ENCODE measurements at regions of chr3 and their contacts with region 1.

Region 1: DNA sequence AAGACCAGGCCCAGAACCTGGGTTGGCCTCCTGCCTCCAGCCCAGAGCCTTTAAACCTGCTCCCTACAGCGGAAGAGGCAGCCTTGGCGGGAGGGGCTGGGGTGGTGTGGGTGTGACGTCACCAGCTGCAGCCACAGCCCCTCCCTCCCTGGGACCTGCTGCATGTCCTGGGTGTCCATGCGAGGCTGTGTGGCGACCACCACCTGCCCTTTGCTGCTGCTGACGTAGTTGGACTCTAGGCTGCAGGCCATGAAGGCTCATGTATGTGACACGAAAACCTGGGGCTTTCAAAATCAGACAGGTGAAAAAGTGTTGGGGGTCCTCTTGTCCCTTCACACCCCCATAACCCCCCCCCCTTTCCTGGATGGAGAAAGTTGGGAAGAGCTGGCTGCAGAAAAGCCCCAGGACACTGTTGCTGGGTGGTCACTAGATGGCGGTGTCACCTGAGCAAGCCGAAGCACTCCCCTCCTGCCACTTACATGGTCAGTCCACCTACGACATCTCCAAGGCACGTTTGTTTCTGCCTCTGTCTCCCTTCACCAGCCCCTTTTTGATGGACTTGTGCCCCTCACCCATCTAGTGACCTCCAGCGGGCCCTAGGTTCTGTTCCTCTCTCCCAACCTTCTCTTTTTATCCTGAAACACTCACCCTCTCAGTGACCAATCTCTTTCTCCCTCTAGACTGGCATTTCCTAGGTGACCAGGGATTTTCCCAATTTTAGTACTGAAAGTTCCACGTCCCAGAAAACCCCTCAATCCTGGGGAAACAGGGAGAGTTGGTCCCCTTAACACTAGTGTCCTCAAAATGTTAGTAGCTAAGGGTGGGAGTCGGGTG is 35.2 kb downstream of the SLC6A20 start:
- DNase-seq: peak in 1 of 2 experiments; percentile 70
- H3K4me3 ChIP-seq: no peak overlapping the region
- H3K27ac ChIP-seq: no peak overlapping the region
- H3K4me1 ChIP-seq: peaks cover 0 to 6% (median 4%) of the 10 kb centered on the region in 4 experiments; a peak in 3 of 7 replicates
- H3K27me3 ChIP-seq: no peaks in the 10 kb centered on the region; a peak in 1 of 7 replicates
- CTCF ChIP-seq: peak; percentile 81 to 93 (median 93)
- EP300 ChIP-seq: no peak
- POLR2A ChIP-seq: no peak
- RAD21 ChIP-seq: peak; percentile 83 to 89

Region 2: GRCh38 chr3:45381168-45381852 is 379.8 kb before region 1 on chr3:
- CTCF ChIA-PET with region 1: no interaction called
- POLR2A ChIA-PET with region 1: no interaction called
- DNase-seq: no peak
- H3K4me3 ChIP-seq: no peak overlapping the region
- H3K27ac ChIP-seq: no peak overlapping the region
- H3K4me1 ChIP-seq: no peaks in the 10 kb centered on the region; a peak in 1 of 7 replicates
- H3K27me3 ChIP-seq: no peaks in the 10 kb centered on the region
- CTCF ChIP-seq: no peak
- EP300 ChIP-seq: no peak
- POLR2A ChIP-seq: no peak
- RAD21 ChIP-seq: no peak

Region 3: DNA sequence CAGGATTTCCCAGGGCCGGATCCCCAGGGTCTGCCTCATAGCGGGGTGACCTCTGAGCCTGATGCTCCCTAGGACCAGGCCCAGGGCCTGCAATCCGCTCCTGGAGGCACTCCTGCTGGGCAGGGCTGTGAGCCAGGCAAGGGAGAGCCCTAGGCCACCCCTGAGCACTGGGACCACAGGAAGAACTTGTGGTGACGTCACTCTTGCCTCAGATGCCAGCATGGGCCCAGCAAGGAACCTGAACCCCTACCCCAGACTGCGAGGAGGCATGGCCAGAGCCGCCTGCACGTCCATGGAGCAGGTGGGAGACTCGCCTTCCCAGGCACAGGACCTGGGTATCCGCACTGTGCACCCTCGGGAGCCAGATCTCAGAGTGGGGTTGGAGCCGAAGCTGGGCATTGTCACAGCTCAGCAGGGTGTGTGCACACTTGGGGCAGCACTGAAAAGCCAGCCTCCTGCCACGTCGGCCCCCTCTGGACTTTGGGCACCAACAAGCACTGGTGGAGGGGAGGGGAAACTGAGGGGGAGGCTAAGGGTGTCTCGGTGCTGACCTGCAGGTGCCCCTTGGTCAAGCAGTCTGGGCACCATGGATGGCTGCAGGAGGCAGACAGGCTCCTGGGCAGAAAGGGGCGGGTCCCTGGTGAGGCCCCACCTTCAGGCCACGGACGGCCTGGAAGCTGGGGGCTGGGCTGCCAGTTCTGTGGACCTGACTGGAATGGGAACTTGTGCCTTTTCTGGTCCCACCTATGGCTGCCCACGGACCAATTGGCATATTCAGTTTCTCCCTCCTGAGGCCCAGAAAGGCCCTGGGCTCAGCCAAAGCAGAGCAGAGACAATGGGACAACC is 14.1 kb before region 1 on chr3:
- CTCF ChIA-PET with region 1: interaction called, 49 read pairs
- POLR2A ChIA-PET with region 1: interaction called, 4 read pairs
- DNase-seq: no peak
- H3K4me3 ChIP-seq: no peak overlapping the region
- H3K27ac ChIP-seq: no peak overlapping the region
- H3K4me1 ChIP-seq: peaks cover 0 to 4% (median 4%) of the 10 kb centered on the region in 4 experiments; a peak in 4 of 7 replicates
- H3K27me3 ChIP-seq: no peaks in the 10 kb centered on the region
- CTCF ChIP-seq: no peak
- EP300 ChIP-seq: no peak
- POLR2A ChIP-seq: no peak
- RAD21 ChIP-seq: no peak

Region 4: DNA sequence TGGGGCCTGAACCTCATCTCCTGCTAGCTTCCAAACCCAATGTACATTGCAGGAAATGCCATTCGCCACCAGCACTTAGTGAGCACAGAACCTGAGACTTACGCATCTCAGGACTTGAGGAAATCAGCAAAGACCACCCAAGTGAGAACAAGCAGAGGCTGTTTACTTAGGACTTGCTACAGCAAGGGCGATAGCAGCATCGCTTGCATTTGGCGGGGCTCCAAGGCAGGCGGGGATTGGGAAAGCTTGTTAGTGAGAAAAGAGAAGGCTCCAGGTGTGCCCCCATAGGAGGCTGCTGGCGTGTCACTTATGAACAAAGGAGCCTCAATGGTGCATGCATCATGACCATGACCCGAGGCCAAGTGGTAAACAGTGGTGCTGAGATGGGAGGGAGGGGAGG is 15.5 kb after region 1 on chr3:
- CTCF ChIA-PET with region 1: interaction called, 64 read pairs
- POLR2A ChIA-PET with region 1: interaction called, 4 read pairs
- DNase-seq: no peak
- H3K4me3 ChIP-seq: no peak overlapping the region
- H3K27ac ChIP-seq: no peak overlapping the region
- H3K4me1 ChIP-seq: peaks cover 0 to 2% (median 0%) of the 10 kb centered on the region in 4 experiments; a peak in 1 of 7 replicates
- H3K27me3 ChIP-seq: no peaks in the 10 kb centered on the region
- CTCF ChIP-seq: no peak
- EP300 ChIP-seq: no peak
- POLR2A ChIP-seq: no peak
- RAD21 ChIP-seq: no peak

Region 5: DNA sequence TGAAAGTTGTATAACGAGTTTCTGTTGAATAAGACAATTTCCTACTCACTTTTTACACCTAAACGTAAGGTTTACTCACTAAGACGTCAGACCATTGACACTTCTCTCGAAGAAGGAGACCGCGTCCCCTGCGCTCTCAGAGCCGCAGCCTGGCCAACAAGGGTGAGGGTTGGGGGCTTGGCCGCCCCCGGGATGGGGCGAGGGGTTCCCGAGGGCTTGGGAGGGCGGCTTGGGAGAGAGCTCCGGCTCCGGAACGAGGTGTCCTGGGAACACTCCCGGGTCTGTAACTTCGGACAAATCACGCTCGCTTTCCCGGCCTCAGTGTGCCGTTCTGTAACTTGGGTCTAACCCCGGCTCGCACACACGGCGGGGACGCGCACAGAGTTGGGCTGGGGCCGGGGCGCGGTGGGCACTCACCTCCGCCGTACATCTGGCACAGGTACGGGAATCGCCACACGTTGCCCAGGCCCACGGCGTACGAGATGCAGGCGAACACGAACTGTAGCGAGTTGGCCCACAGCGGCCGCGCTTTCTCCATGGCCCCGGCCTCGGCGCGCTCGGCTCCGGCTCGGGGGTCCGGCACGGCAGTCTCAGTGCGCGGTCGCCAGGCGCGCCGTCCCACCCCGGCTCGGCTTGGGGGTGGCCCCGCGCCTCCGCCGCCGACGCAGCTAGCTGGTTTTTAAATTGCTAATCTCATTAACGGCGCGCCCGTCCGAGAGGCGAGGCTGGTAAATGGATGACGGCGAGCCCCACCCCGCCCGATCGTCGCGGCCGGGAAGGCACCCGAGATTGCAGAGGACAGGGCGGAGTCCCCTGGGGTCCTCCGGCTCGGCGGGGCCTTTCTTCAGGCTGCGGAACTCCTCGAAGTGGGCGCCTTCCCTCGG is 35.0 kb after region 1 on chr3 and contains the start of gene SLC6A20:
- CTCF ChIA-PET with region 1: interaction called, 13 read pairs
- POLR2A ChIA-PET with region 1: no interaction called
- DNase-seq: peak in 1 of 2 experiments; percentile 67
- H3K4me3 ChIP-seq: peak within 1 kb of the TSS; percentile 47 to 68 (median 54)
- H3K27ac ChIP-seq: no peak within 1 kb of the TSS
- H3K4me1 ChIP-seq: peaks cover 0 to 3% (median 0%) of the 10 kb centered on the region in 4 experiments; a peak in 2 of 7 replicates
- H3K27me3 ChIP-seq: peaks cover 22 to 48% (median 41%) of the 10 kb centered on the region in 4 experiments
- CTCF ChIP-seq: no peak
- EP300 ChIP-seq: no peak
- POLR2A ChIP-seq: no peak
- RAD21 ChIP-seq: no peak
- total RNA-seq, gene SLC6A20: not detected in 2 replicates

Region 6: GRCh38 chr3:45807681-45808540 is 46.8 kb after region 1 on chr3:
- CTCF ChIA-PET with region 1: no interaction called
- POLR2A ChIA-PET with region 1: no interaction called
- DNase-seq: no peak
- H3K4me3 ChIP-seq: no peak overlapping the region
- H3K27ac ChIP-seq: no peak overlapping the region
- H3K4me1 ChIP-seq: no peaks in the 10 kb centered on the region; a peak in 1 of 7 replicates
- H3K27me3 ChIP-seq: no peaks in the 10 kb centered on the region
- CTCF ChIP-seq: no peak
- EP300 ChIP-seq: no peak
- POLR2A ChIP-seq: no peak
- RAD21 ChIP-seq: no peak

Region 7: DNA sequence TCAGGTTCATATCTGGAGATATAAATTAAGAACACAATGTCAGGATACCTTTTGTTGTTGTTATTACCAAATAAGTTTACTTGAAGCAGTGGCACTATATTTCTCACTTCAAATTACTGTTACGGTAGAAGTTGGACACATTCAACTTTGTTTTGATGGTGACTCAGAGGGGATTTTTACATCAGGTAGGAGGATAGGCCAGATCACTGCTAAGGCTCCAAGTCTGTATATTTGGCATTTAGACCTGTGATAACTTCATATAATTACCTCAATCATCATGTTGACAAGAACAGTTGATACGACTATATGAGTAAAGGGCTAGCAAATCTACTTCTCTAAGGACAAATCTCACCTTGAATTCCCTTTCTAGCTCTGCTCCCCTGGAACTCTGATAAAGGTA is 65.2 kb after region 1 on chr3:
- CTCF ChIA-PET with region 1: interaction called, 59 read pairs
- POLR2A ChIA-PET with region 1: no interaction called
- DNase-seq: no peak
- H3K4me3 ChIP-seq: no peak overlapping the region
- H3K27ac ChIP-seq: no peak overlapping the region
- H3K4me1 ChIP-seq: no peaks in the 10 kb centered on the region
- H3K27me3 ChIP-seq: no peaks in the 10 kb centered on the region
- CTCF ChIP-seq: no peak
- EP300 ChIP-seq: no peak
- POLR2A ChIP-seq: no peak
- RAD21 ChIP-seq: no peak

Region 8: GRCh38 chr3:45832691-45833090 is 71.6 kb after region 1 on chr3:
- CTCF ChIA-PET with region 1: interaction called, 59 read pairs
- POLR2A ChIA-PET with region 1: interaction called, 4 read pairs
- DNase-seq: no peak
- H3K4me3 ChIP-seq: no peak overlapping the region
- H3K27ac ChIP-seq: no peak overlapping the region
- H3K4me1 ChIP-seq: no peaks in the 10 kb centered on the region
- H3K27me3 ChIP-seq: no peaks in the 10 kb centered on the region
- CTCF ChIP-seq: peak in 2 of 3 experiments; percentile 56 to 69; a peak in 3 of 4 replicates
- EP300 ChIP-seq: no peak
- POLR2A ChIP-seq: no peak
- RAD21 ChIP-seq: peak; percentile 75 to 83

Region 9: GRCh38 chr3:45841757-45842491 is 80.8 kb after region 1 on chr3 and contains the start of gene LZTFL1:
- CTCF ChIA-PET with region 1: interaction called, 59 read pairs
- POLR2A ChIA-PET with region 1: no interaction called
- DNase-seq: peak; percentile 83 to 88
- H3K4me3 ChIP-seq: peak within 1 kb of the TSS; percentile 70 to 85 (median 72)
- H3K27ac ChIP-seq: peak within 1 kb of the TSS; percentile 42; the same call in 1 of the 2 replicates
- H3K4me1 ChIP-seq: peaks cover 0 to 3% (median 2%) of the 10 kb centered on the region in 4 experiments; a peak in 3 of 7 replicates
- H3K27me3 ChIP-seq: peaks cover 0 to 19% (median 3%) of the 10 kb centered on the region in 4 experiments; a peak in 3 of 7 replicates
- CTCF ChIP-seq: no peak
- EP300 ChIP-seq: no peak
- POLR2A ChIP-seq: peak in 1 of 2 experiments; percentile 37; a peak in 2 of 3 replicates
- RAD21 ChIP-seq: no peak
- total RNA-seq, gene LZTFL1: 11.5 and 11.8 TPM in 2 replicates